Calu3 (cell line): ENCODE measurements at regions of chr1 and their contacts with region 1.

Region 1: GRCh38 chr1:31064718-31065309 is 703 bp downstream of the PUM1 start:
- DNase-seq: peak; percentile 6
- H3K4me3 Mint-ChIP-seq: peak overlapping the region; percentile 98
- H3K27ac Mint-ChIP-seq: peak overlapping the region; percentile 100
- H3K4me1 Mint-ChIP-seq: no peaks in the 10 kb centered on the region
- H3K27me3 Mint-ChIP-seq: no peaks in the 10 kb centered on the region
- CTCF ChIP-seq: no peak

Region 2: DNA sequence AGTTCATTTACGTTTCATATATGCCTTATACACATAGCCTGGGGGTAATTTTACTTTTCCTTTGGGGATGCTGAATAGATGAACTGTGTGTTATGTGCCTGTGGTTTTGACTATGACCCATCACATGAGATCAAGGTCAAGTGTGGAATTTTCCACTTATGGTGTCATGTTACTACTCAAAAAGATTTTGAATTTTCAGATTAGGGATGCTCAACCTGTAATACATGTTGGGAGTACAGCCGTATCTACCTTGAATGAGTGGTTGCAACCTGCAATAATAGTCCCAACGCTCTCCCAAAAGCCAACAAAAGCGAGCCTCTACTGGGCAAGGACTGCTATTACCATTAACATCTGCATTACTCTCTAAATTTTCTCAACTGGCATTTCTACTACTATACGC is 87.7 kb before region 1 on chr1:
- CTCF ChIA-PET with region 1: no interaction called
- intact Hi-C with region 1: loop called (anchors 5 kb)
- DNase-seq: no peak
- H3K4me3 Mint-ChIP-seq: peak overlapping the region; percentile 52
- H3K27ac Mint-ChIP-seq: peak overlapping the region; percentile 56
- H3K4me1 Mint-ChIP-seq: peaks cover 64% of the 10 kb centered on the region
- H3K27me3 Mint-ChIP-seq: no peaks in the 10 kb centered on the region
- CTCF ChIP-seq: peak; percentile 33

Region 3: DNA sequence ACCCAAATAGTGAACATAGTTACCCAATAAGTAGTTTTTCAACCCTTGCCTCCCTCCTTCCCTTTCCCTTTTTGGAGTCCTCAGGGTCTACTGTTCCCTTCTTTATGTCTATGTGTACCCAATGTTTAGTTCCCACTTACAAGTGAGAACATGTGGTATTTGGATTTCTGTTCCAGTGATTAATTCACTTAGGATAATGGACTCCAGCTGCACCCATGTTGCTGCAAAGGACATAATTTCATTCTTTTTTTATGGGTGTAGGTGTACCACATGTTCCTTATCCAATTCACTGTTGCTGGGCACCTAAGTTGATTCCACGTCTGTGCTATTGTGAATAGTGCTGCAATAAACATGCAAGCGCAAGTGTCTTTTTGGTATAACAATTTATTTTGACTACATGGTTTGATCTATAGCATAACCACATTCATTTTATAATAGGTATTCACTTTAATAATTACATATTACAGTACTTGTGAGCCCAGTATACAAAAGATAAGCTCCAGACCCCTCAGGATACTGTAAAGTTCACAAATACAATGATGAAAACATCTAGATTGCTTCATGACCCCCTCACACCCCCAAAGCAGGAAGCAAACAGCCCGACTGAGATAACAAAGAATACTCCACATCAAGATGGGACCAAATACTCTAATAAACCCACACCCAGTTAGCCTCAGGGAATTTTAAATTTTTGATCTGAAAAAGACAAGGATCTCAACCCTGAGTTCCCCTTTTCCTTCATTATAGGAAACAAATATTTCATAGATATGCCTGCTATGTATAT is 44.6 kb before region 1 on chr1:
- CTCF ChIA-PET with region 1: no interaction called
- intact Hi-C with region 1: loop called (anchors 5 kb)
- DNase-seq: no peak
- H3K4me3 Mint-ChIP-seq: no peak overlapping the region
- H3K27ac Mint-ChIP-seq: no peak overlapping the region
- H3K4me1 Mint-ChIP-seq: peaks cover 51% of the 10 kb centered on the region
- H3K27me3 Mint-ChIP-seq: no peaks in the 10 kb centered on the region
- CTCF ChIP-seq: no peak

Region 4: GRCh38 chr1:31084782-31085569 is 20.2 kb after region 1 on chr1:
- CTCF ChIA-PET with region 1: no interaction called
- intact Hi-C with region 1: no loop called
- DNase-seq: no peak
- H3K4me3 Mint-ChIP-seq: no peak overlapping the region
- H3K27ac Mint-ChIP-seq: no peak overlapping the region
- H3K4me1 Mint-ChIP-seq: no peaks in the 10 kb centered on the region
- H3K27me3 Mint-ChIP-seq: no peaks in the 10 kb centered on the region
- CTCF ChIP-seq: no peak